Dorsolateral prefrontal cortex (tissue), 120 donors: ENCODE measurements at regions of chr16 and their contacts with region 1.

Region 1: GRCh38 chr16:19666477-19666876 is 51.5 kb downstream of the KNOP1 start:
- DNase-seq: peak in 9 of 10 donors; percentile 43 to 81 (median 62)
- H3K4me3 ChIP-seq: peak overlapping the region in 6 of 59 donors; percentile 6 to 31 (median 20)
- H3K27ac ChIP-seq: peak overlapping the region; percentile 19 to 96 (median 89)
- H3K27me3 ChIP-seq: no peaks in the 10 kb centered on the region
- CTCF ChIP-seq: peak in 7 of 56 donors; percentile 11 to 27 (median 16)

Region 2: GRCh38 chr16:19578378-19578971 is 88.0 kb before region 1 on chr16:
- intact Hi-C with region 1: loop called in 1 of 2 experiments (anchors 5 kb)
- DNase-seq: peak; percentile 17 to 95 (median 90)
- H3K4me3 ChIP-seq: peak overlapping the region in 21 of 59 donors; percentile 5 to 41 (median 19)
- H3K27ac ChIP-seq: peak overlapping the region; percentile 73 to 100 (median 97)
- H3K27me3 ChIP-seq: no peaks in the 10 kb centered on the region
- CTCF ChIP-seq: peak in 55 of 56 donors; percentile 25 to 75 (median 55)

Region 3: GRCh38 chr16:19745286-19746010 is 79.0 kb after region 1 on chr16:
- intact Hi-C with region 1: loop called in 1 of 2 experiments (anchors 5 kb)
- DNase-seq: peak in 1 of 10 donors; percentile 36
- H3K4me3 ChIP-seq: no peak overlapping the region
- H3K27ac ChIP-seq: peak overlapping the region in 46 of 59 donors; percentile 7 to 74 (median 43)
- H3K27me3 ChIP-seq: no peaks in the 10 kb centered on the region
- CTCF ChIP-seq: no peak

Region 4: DNA sequence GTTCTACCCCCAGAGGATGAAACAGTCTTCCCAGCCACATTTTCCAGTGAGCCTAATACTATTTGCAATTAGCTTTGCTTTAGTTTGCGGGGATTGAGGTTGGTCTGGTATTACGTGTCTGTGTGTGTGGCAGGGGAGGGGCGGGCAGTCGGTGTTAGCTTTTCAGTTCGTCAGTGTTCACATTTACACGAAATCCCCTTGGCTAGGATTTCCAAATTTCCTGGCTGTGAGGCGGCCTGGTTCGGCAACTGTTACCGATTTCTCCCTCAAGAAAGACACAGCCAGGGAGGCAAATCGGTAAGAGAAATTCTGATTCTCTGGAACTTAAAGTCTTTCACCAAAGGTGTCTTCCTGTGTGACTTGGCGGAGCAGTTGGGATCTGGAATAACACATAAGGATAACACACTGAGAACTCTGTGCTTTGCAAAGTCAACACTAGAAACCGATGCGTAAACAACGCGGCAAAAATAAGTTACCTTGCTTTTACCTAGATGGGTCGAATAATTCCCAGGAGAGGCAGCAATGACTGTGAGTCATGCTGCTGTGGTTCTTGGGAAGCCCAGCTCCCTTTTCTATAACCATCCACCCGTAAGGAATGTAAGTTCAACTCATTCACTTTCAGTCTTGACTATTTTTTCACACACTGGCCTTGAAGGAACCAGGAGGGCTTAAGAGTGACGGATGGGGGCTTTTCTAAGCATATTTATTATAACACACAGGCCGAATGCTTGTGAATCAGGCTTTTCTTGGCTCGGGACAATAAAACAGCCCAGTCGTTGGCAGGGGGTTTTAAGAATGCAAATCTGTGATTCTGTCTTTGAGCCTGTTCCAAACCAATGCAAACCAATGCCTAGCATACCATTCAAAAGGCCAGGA is 193.9 kb after region 1 on chr16:
- intact Hi-C with region 1: loop called in 1 of 2 experiments (anchors 2 kb)
- DNase-seq: peak in 3 of 10 donors; percentile 26 to 29 (median 26)
- H3K4me3 ChIP-seq: peak overlapping the region in 51 of 59 donors; percentile 10 to 60 (median 40)
- H3K27ac ChIP-seq: peak overlapping the region; percentile 43 to 99 (median 97)
- H3K27me3 ChIP-seq: no peaks in the 10 kb centered on the region
- CTCF ChIP-seq: no peak